Breast epithelium (tissue), 4 donors: ENCODE measurements at regions of chr3 and their contacts with region 1.

Region 1: GRCh38 chr3:100540791-100541334 is 48.4 kb downstream of the TMEM45A start:
- DNase-seq: no peak
- H3K4me3 ChIP-seq: no peak overlapping the region
- H3K27ac ChIP-seq: no peak overlapping the region
- H3K4me1 ChIP-seq: no peaks in the 10 kb centered on the region
- H3K27me3 ChIP-seq: no peaks in the 10 kb centered on the region
- CTCF ChIP-seq: no peak
- POLR2A ChIP-seq: no peak

Region 2: GRCh38 chr3:100486808-100487207 is 54.1 kb before region 1 on chr3:
- intact Hi-C with region 1: loop called (anchors 5 kb)
- DNase-seq: no peak
- H3K4me3 ChIP-seq: no peak overlapping the region
- H3K27ac ChIP-seq: no peak overlapping the region
- H3K4me1 ChIP-seq: no peaks in the 10 kb centered on the region
- H3K27me3 ChIP-seq: no peaks in the 10 kb centered on the region
- CTCF ChIP-seq: no peak
- POLR2A ChIP-seq: no peak

Region 3: DNA sequence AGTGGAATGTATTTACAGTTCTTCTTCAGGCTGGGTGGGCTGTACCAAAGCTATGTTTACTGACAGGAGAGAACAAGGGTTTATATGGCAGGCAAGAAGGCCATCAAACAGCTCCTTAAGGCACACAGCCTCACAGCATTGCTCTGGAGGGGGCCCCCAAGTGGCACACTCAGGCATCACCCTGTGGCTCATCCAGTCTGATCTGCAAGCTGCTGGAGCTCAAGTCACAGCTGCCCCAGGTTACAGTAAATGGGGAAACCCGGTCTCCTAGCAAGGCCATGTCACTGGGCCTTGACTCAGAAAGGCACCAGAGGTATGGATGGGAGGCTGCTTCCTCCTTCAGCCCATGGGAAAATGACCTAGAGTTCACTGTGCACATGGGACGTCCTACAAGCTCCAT is 235.9 kb after region 1 on chr3:
- intact Hi-C with region 1: no loop called
- DNase-seq: no peak
- H3K4me3 ChIP-seq: no peak overlapping the region
- H3K27ac ChIP-seq: no peak overlapping the region
- H3K4me1 ChIP-seq: no peaks in the 10 kb centered on the region
- H3K27me3 ChIP-seq: no peaks in the 10 kb centered on the region
- CTCF ChIP-seq: no peak
- POLR2A ChIP-seq: no peak